ENCODE measurements at regions of chr2 and their contacts with region 1.

Region 1: DNA sequence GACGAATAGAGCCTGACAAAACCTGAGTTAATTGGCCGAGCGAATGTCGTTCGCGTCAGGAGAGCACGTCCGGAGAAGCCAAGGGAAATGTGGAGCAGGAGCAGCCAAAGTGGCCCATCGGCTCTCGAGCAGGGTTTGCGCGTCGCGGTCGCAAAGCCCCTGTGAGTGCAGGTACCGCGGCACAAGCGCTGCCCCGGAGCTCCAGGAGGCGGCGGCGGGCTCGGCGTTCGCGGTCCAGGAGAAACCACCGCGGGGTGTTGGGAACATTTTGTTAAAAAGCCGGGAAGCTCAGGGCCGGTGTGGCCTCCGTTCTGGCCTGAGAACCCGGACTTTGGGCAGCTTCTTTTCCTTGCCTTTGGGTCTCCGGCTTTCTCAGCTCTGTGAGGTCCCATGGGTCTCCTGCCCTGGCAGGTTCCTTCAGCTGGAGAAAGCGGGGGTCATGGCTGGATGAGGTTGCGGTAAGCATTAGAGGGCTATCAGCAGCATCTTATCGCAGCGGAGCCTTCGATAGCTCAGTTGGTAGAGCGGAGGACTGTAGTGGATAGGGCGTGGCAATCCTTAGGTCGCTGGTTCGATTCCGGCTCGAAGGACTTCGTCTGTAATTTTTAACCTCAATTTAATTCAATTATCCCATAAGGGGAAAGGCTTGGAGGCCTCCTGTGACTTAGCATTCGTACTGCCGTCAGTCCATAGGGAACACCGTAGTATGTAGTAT is 1.0 kb upstream of the AGBL5 start:
- DNase-seq: peak; percentile 93 to 95
- H3K4me3 ChIP-seq: peak overlapping the region; percentile 98
- H3K27ac ChIP-seq: peak overlapping the region; percentile 70
- H3K4me1 ChIP-seq: peaks cover 14% of the 10 kb centered on the region
- H3K27me3 ChIP-seq: no peaks in the 10 kb centered on the region
- CTCF ChIP-seq: peak; percentile 28; the same call in 1 of the 2 replicates

Region 2: DNA sequence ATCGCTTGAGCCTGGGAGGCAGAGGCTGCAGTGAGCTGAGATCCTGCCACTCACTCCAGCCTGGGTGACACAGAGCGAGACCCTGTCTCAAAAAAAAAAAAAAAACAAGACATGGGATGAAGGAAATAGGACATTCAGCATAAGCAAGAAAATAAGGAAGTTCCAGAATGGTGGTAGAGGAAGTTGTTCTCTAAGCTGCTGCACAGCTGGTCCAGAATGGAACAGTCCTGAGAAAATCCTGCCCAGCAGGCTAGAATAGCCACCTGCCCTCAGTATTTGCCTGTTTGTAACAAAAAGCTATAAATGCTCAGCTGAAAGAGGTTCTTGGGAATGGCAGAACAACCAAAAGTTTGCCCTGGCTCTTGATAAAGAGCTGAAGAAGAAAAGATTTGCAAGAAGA is 91.1 kb before region 1 on chr2:
- CTCF ChIA-PET with region 1: interaction called, 5 read pairs
- POLR2A ChIA-PET with region 1: no interaction called
- intact Hi-C with region 1: loop called (anchors 1 kb)
- DNase-seq: no peak
- H3K4me3 ChIP-seq: no peak overlapping the region
- H3K27ac ChIP-seq: no peak overlapping the region
- H3K4me1 ChIP-seq: peaks cover 10% of the 10 kb centered on the region
- H3K27me3 ChIP-seq: peaks cover 14% of the 10 kb centered on the region; the same call in 1 of the 2 replicates
- CTCF ChIP-seq: no peak

Region 3: GRCh38 chr2:27032495-27033252 is 17.8 kb before region 1 on chr2 and contains the start of gene TMEM214:
- CTCF ChIA-PET with region 1: interaction called, 3 read pairs
- POLR2A ChIA-PET with region 1: interaction called, 4 read pairs
- intact Hi-C with region 1: loop called (anchors 1 kb)
- DNase-seq: peak; percentile 70 to 83
- H3K4me3 ChIP-seq: peak within 1 kb of the TSS; percentile 95
- H3K27ac ChIP-seq: peak within 1 kb of the TSS; percentile 29; the same call in 1 of the 2 replicates
- H3K4me1 ChIP-seq: peaks cover 16% of the 10 kb centered on the region
- H3K27me3 ChIP-seq: no peaks in the 10 kb centered on the region
- CTCF ChIP-seq: no peak
- total RNA-seq, gene TMEM214: 60.9 and 65.6 TPM in 2 replicates

Measured in PC-9 (cell line).